Naive thymus-derived CD4-positive, alpha-beta T cell (primary cell): ENCODE measurements at regions of chr12 and their contacts with region 1.

Region 1: DNA sequence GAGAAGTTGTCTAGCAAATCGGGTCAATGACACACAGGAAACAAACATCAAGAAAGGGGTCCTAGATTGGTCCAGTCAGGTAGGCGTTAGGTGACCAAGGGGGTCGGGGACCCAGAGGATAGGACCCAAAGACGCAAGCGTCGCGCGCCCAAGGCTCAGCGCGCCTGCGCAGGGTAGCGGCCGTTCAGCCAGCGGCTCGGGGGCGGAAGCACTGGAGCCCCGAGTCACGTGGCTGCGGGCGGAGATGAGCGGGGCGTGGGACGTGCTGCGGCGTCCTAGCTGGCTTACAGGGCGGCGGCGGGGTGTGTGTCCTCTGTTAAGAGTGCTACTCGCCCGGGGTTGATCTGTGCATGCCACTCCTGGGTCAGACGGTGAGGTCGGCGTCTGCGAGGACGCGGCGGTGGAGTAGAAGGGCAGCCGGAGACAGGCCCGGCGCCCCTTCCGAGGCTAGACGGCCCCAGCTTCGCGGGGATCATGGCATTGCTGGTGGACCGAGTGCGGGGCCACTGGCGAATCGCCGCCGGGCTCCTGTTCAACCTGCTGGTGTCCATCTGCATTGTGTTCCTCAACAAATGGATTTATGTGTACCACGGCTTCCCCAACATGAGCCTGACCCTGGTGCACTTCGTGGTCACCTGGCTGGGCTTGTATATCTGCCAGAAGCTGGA is at the start of gene SLC35E3:
- DNase-seq: peak; percentile 81 to 91 (median 86)
- ATAC-seq: peak; percentile 99
- H3K4me3 ChIP-seq: peak within 1 kb of the TSS; percentile 98
- H3K4me3 Mint-ChIP-seq: peak within 1 kb of the TSS; percentile 91 to 99 (median 96)
- H3K27ac ChIP-seq: peak within 1 kb of the TSS; percentile 79
- H3K27ac Mint-ChIP-seq: peak within 1 kb of the TSS; percentile 92 to 97 (median 96)
- H3K4me1 ChIP-seq: peaks cover 7 to 16% of the 10 kb centered on the region in 2 donors
- H3K4me1 Mint-ChIP-seq: peaks cover 27 to 64% (median 54%) of the 10 kb centered on the region in 7 donors
- H3K27me3 ChIP-seq: no peaks in the 10 kb centered on the region
- H3K27me3 Mint-ChIP-seq: no peaks in the 10 kb centered on the region
- total RNA-seq, gene SLC35E3: 9.0 to 12.1 (median 9.2) TPM

Region 2: DNA sequence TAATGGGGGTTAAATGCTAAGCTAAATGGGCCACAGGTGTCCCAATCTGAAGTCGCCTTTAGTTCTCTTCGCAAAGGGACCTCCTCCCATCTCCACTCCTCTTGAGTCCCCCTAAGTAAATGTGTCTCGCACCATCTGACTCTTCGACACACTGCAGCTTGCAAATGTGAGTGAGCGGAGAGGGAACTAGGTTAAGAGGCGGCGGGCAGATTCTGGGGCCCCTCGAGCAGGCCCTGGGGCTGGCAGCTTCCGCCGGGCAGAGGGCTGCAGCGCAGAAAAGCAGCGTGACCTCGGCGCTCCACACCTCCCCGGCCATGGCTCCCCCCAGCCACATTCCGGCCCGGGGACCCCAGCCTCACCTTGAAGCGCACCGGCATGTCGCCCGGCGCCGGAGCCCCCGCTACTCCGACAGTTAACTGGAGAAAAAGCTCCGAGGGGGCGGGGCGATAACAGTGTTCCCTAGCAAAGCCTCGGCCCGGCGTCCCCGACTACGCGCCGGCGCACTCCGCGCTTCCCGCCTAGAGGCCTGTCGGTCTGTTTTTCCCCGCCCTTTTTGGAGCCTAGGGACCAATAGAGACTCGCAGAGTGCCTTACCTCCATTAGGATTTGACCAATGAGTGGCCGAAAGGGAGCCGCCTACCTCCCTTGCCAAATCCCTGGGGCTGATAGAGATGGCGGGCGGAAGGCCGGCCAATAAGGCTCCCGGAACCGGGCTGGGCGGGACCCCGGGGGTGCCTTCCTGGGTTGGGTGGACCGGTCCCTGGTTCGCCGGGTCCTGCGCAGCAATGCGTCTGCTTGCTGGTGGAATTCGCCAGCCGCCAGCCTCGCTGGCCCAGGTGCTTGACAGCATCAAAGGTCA is 413.9 kb before region 1 on chr12 and contains the start of gene MDM1:
- CTCF ChIA-PET with region 1: no interaction called
- POLR2A ChIA-PET with region 1: interaction called, 5 read pairs
- intact Hi-C with region 1: loop called (anchors 1 kb)
- DNase-seq: peak; percentile 85 to 96 (median 95)
- ATAC-seq: peak; percentile 98
- H3K4me3 ChIP-seq: peak within 1 kb of the TSS; percentile 68
- H3K4me3 Mint-ChIP-seq: peak within 1 kb of the TSS; percentile 85 to 93 (median 91)
- H3K27ac ChIP-seq: peak within 1 kb of the TSS; percentile 73
- H3K27ac Mint-ChIP-seq: peak within 1 kb of the TSS; percentile 78 to 93 (median 90)
- H3K4me1 ChIP-seq: peaks cover 9 to 26% of the 10 kb centered on the region in 2 donors
- H3K4me1 Mint-ChIP-seq: peaks cover 33 to 61% (median 52%) of the 10 kb centered on the region in 7 donors
- H3K27me3 ChIP-seq: no peaks in the 10 kb centered on the region
- H3K27me3 Mint-ChIP-seq: peaks cover 0 to 15% (median 0%) of the 10 kb centered on the region in 5 donors
- total RNA-seq, gene MDM1: 16.2 to 38.4 (median 23.4) TPM

Region 3: DNA sequence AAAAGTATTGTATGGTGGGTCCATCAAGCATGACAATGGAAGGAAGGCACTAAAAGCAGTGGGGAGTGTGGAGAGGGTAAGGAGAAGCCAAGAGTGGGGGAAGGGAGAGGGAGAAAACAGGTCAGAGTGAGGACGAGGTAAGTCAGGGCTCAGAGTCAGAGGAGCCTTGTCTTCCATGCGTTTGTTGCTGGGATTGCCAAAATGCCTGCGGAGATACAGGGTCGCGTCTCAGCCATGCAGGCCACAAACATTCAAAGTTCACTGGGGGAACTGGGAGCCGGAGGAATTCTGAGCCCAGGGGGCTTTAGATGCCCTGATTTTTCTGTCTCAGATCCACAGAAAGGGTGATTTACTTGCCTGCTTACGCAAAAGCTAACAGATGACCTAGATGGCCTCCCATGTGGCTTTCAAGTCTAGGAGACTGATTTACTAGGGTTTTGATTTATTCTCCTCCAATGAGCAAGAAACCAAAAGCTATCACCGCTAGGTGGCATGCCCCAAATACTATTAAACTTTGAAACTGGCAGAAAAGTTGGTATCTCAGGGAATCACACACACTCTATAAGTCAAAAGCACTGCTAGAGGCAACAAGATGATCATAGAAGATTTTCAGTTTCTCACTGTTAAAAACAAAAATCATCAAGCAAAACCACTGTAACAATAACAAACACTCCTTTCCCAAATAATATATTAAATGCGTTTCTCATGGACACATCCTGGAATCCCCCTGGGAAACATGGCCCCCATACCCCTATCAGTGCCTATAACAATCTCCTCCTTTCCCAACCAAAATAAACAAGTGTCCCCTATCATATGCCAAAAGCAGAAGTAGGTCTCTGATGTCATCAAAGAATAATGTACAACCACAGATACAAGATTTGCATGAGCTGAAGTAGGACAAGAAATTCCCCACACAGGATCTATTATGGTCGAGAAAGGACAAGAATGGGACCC is 387.2 kb before region 1 on chr12:
- CTCF ChIA-PET with region 1: no interaction called
- POLR2A ChIA-PET with region 1: no interaction called
- intact Hi-C with region 1: loop called (anchors 1 to 2 kb)
- DNase-seq: peak in 7 of 9 donors; percentile 56 to 80 (median 76)
- ATAC-seq: peak; percentile 84
- H3K4me3 ChIP-seq: no peak overlapping the region
- H3K4me3 Mint-ChIP-seq: peak overlapping the region in 1 of 10 donors; percentile 38
- H3K27ac ChIP-seq: no peak overlapping the region
- H3K27ac Mint-ChIP-seq: peak overlapping the region in 2 of 9 donors; percentile 56 to 72
- H3K4me1 ChIP-seq: peaks cover 13 to 17% of the 10 kb centered on the region in 2 donors
- H3K4me1 Mint-ChIP-seq: peaks cover 25 to 36% (median 30%) of the 10 kb centered on the region in 7 donors
- H3K27me3 ChIP-seq: no peaks in the 10 kb centered on the region
- H3K27me3 Mint-ChIP-seq: no peaks in the 10 kb centered on the region

Region 4: GRCh38 chr12:68792952-68793835 is 47.2 kb after region 1 on chr12:
- CTCF ChIA-PET with region 1: interaction called, 3 read pairs
- POLR2A ChIA-PET with region 1: no interaction called
- intact Hi-C with region 1: loop called in 1 of 2 experiments (anchors 5 kb)
- DNase-seq: peak in 6 of 9 donors; percentile 33 to 54 (median 41)
- ATAC-seq: peak; percentile 93
- H3K4me3 ChIP-seq: no peak overlapping the region
- H3K4me3 Mint-ChIP-seq: no peak overlapping the region
- H3K27ac ChIP-seq: no peak overlapping the region
- H3K27ac Mint-ChIP-seq: no peak overlapping the region
- H3K4me1 ChIP-seq: no peaks in the 10 kb centered on the region
- H3K4me1 Mint-ChIP-seq: peaks cover 0 to 4% (median 0%) of the 10 kb centered on the region in 7 donors
- H3K27me3 ChIP-seq: no peaks in the 10 kb centered on the region
- H3K27me3 Mint-ChIP-seq: no peaks in the 10 kb centered on the region

Region 5: DNA sequence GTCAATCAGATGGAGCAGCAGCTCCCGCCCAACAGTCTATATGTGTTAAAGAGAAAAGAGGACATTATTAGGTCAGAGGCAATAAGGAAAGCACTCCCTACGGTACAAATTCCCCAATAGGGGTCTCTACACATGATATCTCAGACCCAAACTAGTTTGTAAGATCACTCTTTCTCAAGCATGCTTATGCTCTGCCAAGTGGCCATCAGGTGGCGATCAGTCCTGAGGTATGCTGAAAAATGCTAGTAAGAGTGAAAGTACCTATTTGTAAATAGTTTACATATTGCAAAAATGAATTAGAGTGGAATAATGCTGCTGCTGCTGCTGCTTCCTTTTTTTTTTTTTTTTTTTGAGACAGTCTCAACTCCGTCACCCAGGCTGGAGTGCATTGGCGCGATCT is 125.9 kb after region 1 on chr12:
- CTCF ChIA-PET with region 1: no interaction called
- POLR2A ChIA-PET with region 1: no interaction called
- intact Hi-C with region 1: no loop called
- DNase-seq: no peak
- ATAC-seq: peak; percentile 36
- H3K4me3 ChIP-seq: no peak overlapping the region
- H3K4me3 Mint-ChIP-seq: no peak overlapping the region
- H3K27ac ChIP-seq: no peak overlapping the region
- H3K27ac Mint-ChIP-seq: no peak overlapping the region
- H3K4me1 ChIP-seq: no peaks in the 10 kb centered on the region
- H3K4me1 Mint-ChIP-seq: peaks cover 0 to 12% (median 0%) of the 10 kb centered on the region in 7 donors
- H3K27me3 ChIP-seq: no peaks in the 10 kb centered on the region
- H3K27me3 Mint-ChIP-seq: peaks cover 0 to 6% (median 0%) of the 10 kb centered on the region in 5 donors